Sigmoid colon (tissue), 7 donors: ENCODE measurements at regions of chr16 and their contacts with region 1.

Region 1: DNA sequence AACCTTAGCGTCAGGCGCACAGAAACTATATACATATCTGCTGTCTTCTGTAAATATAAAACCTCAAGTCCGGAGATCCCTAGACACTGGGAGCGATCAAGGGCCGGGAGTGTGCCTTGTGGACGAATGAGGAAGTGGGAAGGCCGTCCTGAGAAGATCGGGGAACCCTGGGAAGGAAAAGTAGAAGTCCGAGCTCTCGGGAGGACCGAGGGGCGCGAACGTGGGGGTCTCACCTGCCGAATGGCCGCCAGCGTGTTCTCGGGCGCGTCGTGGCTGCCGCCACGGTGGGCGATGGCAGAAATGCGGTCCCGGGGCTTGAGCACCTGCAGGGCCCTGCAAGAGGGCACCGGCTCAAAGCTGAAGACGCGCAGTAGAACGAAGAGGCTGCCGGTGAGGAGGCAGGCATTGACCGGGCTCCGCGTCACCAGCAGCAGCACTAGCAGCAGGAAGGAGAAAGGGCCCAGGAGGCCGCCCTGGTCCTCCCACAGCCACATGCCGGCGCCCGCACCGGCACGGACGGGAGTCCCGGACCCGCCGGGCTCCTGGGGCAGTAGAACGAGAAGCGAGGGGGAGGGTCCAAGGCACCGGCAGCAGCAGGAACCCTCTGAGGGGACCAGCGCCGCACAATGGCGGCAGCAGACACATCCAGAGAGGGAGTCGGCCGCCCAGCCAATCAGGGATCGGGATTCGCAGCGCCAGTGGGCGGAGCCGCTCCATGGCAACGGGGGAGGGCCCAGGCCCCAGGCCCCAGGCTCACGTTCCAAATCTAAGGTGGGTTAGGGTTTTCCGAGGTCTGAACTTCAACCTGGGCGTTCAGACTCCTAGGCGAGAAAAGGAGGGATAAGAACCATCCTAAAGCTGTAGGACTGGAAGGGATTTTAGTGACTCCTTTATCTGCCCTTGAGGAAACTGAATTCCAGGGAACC is at the start of gene GDE1:
- DNase-seq: peak; percentile 97
- H3K4me3 ChIP-seq: peak within 1 kb of the TSS; percentile 83 to 87 (median 86)
- H3K27ac ChIP-seq: peak within 1 kb of the TSS; percentile 93 to 98 (median 96)
- H3K4me1 ChIP-seq: peaks cover 0 to 57% (median 38%) of the 10 kb centered on the region in 4 donors
- H3K27me3 ChIP-seq: no peaks in the 10 kb centered on the region
- CTCF ChIP-seq: peak in 1 of 4 experiments; percentile 16
- EP300 ChIP-seq: peak in 1 of 4 donors; percentile 19
- POLR2A ChIP-seq: peak; percentile 88 to 93
- total RNA-seq, gene GDE1: 78.5 to 107 (median 103) TPM

Region 2: GRCh38 chr16:18801197-18801972 is 720.3 kb before region 1 on chr16 and contains the start of gene ARL6IP1:
- intact Hi-C with region 1: loop called (anchors 5 kb)
- DNase-seq: peak; percentile 100
- H3K4me3 ChIP-seq: peak within 1 kb of the TSS; percentile 61 to 95 (median 90)
- H3K27ac ChIP-seq: peak within 1 kb of the TSS; percentile 90 to 95 (median 93)
- H3K4me1 ChIP-seq: peaks cover 0 to 42% (median 30%) of the 10 kb centered on the region in 4 donors
- H3K27me3 ChIP-seq: no peaks in the 10 kb centered on the region
- CTCF ChIP-seq: peak; percentile 87 to 96 (median 90)
- EP300 ChIP-seq: no peak
- POLR2A ChIP-seq: peak; percentile 96 to 98
- total RNA-seq, gene ARL6IP1: 77.5 to 128 (median 114) TPM

Region 3: DNA sequence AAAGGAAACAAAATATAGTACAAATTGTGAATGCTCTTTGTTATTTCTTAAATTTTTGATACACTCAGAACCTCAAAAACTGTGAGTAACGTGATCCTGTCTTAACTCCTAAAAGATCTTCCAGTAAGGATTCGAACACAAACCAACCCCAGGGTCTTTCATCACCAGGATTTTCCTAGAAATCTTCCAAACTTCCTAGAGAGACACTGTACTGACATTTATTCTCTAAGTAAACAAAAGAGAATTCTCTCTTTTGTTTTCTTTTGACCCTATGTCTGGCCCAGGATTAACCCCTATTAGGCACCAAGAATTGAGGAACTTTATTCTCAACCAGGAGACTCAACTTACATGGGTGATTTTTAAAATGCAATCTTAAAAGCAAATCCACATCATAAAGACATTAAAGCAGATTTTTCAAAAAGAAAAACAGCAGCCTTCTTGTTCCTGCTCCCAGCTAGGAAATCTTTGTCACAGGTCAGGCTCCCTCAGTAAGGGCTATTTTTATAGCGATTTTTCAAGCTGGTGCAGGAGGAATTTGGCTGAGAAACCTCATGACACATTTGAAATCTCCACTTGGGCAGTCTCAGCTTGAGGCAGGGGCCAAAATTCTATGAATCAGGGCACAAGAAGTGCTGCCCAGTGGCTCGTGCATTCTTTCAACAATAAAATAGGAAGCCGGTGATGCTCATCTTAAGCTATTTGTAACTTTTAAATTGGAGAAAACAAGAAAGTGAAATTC is 589.3 kb before region 1 on chr16:
- intact Hi-C with region 1: loop called (anchors 5 kb)
- DNase-seq: no peak
- H3K4me3 ChIP-seq: no peak overlapping the region
- H3K27ac ChIP-seq: peak overlapping the region in 2 of 4 donors; percentile 41 to 76
- H3K4me1 ChIP-seq: peaks cover 0 to 10% (median 0%) of the 10 kb centered on the region in 4 donors
- H3K27me3 ChIP-seq: no peaks in the 10 kb centered on the region
- CTCF ChIP-seq: no peak
- EP300 ChIP-seq: no peak
- POLR2A ChIP-seq: no peak

Region 4: DNA sequence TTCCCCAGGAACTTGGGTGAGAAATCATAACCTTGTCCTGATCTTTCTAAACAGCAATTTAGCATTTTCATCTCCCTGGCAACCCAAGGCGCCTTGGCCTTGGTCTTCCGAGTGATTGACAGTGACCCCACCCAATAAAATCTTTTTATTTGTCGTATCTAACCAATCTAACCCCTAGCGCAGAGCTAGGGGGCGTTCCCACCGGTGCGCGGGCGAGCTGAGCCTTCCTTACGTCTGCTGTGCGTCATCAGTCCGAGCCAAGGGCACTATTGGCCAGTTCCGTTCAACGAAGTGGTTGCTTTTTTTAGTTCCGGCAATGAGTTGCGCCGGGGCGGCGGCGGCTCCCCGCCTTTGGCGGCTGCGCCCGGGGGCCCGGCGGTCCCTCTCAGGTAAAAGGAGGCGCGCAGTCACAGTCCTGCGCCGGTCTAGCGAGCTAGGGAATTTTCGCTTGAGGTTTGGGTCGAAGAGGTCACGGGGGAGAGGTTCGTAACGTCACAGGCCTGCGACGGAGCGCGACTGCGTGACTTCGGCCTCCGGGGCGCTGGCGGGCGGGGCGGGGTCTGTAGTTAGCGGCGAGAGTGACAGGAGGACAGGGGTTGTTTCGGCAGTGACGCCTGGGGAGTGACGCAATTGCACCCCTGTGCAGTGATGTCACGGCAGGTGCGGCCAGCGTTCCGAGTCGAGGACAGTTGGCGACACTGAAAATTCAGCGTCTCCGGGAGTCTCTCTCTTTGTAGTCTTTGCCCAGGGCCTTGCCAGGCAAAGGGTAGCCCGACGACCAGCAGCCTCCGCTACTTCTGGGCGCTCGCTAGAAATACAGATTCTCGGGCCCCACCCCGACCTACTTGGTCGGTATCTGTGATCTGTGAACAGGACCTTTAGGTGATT is 454.1 kb before region 1 on chr16 and contains the start of gene COQ7:
- intact Hi-C with region 1: loop called (anchors 5 kb)
- DNase-seq: peak; percentile 99
- H3K4me3 ChIP-seq: peak within 1 kb of the TSS; percentile 61 to 89 (median 79)
- H3K27ac ChIP-seq: peak within 1 kb of the TSS; percentile 97 to 99 (median 98)
- H3K4me1 ChIP-seq: peaks cover 0 to 21% (median 15%) of the 10 kb centered on the region in 4 donors
- H3K27me3 ChIP-seq: no peaks in the 10 kb centered on the region
- CTCF ChIP-seq: no peak
- EP300 ChIP-seq: peak in 2 of 4 donors; percentile 34 to 42
- POLR2A ChIP-seq: peak; percentile 8 to 62
- total RNA-seq, gene COQ7: 17.1 to 21.3 (median 18.8) TPM

Region 5: GRCh38 chr16:19555162-19555937 is 33.6 kb after region 1 on chr16 and contains the start of gene VPS35L:
- intact Hi-C with region 1: loop called (anchors 2 kb)
- DNase-seq: peak; percentile 98
- H3K4me3 ChIP-seq: peak within 1 kb of the TSS; percentile 69 to 88 (median 76)
- H3K27ac ChIP-seq: peak within 1 kb of the TSS; percentile 86 to 90 (median 88)
- H3K4me1 ChIP-seq: peaks cover 0 to 18% (median 17%) of the 10 kb centered on the region in 4 donors
- H3K27me3 ChIP-seq: no peaks in the 10 kb centered on the region
- CTCF ChIP-seq: peak; percentile 64 to 72 (median 68)
- EP300 ChIP-seq: peak in 1 of 4 donors; percentile 4
- POLR2A ChIP-seq: peak in 1 of 2 donors; percentile 22
- total RNA-seq, gene VPS35L: 34.6 to 53.7 (median 47.8) TPM

Region 6: DNA sequence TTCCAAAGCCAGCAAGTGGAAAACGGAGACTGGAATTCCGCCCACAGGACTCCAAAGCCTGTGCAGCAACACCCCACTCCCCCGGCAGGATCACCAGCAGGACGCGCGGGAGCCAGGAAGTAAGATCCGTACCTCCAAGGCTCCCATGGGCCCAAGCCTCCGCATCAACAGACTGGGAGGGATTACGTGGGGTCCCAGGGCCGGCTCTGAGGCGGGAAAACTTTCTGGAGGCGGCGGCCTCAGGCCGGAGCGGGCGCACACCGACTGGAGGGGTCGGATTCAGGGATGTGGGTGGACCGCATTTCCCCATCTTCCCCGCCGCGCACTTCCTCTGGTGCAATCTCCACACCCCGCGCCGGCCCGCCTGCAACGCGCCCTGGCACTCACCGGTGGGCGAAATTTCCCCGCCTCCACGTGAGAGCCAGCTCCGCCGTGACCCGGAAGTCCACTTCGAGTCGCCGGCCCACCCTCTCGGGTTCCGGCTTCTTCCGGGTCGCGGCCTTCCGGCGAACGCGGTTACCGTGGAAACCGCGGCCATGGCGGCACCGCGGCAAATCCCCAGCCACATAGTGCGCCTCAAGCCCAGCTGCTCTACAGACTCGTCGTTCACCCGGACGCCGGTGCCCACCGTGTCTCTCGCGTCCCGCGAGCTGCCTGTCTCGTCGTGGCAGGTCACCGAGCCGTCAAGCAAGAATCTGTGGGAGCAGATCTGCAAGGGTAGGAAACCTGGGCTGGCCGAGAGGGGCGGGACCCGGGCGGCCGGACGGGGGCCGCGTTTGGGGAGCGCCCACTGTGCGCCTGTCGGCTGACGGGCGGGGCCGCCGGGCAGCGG is 196.3 kb after region 1 on chr16 and contains the starts of genes IQCK and KNOP1:
- intact Hi-C with region 1: loop called (anchors 10 kb)
- DNase-seq: peak; percentile 96
- H3K4me3 ChIP-seq: peak within 1 kb of the TSS; percentile 80 to 98 (median 88)
- H3K27ac ChIP-seq: peak within 1 kb of the TSS; percentile 70 to 88 (median 81)
- H3K4me1 ChIP-seq: peaks cover 0 to 23% (median 21%) of the 10 kb centered on the region in 4 donors
- H3K27me3 ChIP-seq: no peaks in the 10 kb centered on the region
- CTCF ChIP-seq: peak in 1 of 4 experiments; percentile 21
- EP300 ChIP-seq: peak in 1 of 4 donors; percentile 5
- POLR2A ChIP-seq: no peak
- total RNA-seq, gene IQCK: 10.3 to 16.6 (median 12.4) TPM
- total RNA-seq, gene KNOP1: 5.0 to 11.1 (median 7.6) TPM

Region 7: GRCh38 chr16:20049845-20050244 is 528.1 kb after region 1 on chr16:
- intact Hi-C with region 1: no loop called
- DNase-seq: no peak
- H3K4me3 ChIP-seq: no peak overlapping the region
- H3K27ac ChIP-seq: no peak overlapping the region
- H3K4me1 ChIP-seq: no peaks in the 10 kb centered on the region
- H3K27me3 ChIP-seq: no peaks in the 10 kb centered on the region
- CTCF ChIP-seq: no peak
- EP300 ChIP-seq: no peak
- POLR2A ChIP-seq: no peak